ENCODE measurements at regions of chr2 and their contacts with region 1.

Region 1: GRCh38 chr2:235113854-235114253 is 162.0 kb downstream of the SH3BP4 start:
- DNase-seq: no peak
- H3K4me3 ChIP-seq: no peak overlapping the region
- H3K4me1 ChIP-seq: no peaks in the 10 kb centered on the region
- H3K27me3 ChIP-seq: no peaks in the 10 kb centered on the region

Region 2: GRCh38 chr2:234550511-234551107 is 563.2 kb before region 1 on chr2:
- in situ Hi-C with region 1: loop called (anchors 5 kb)
- DNase-seq: peak; percentile 74 to 77
- H3K4me3 ChIP-seq: no peak overlapping the region
- H3K4me1 ChIP-seq: 0 out of 2 replicates have a peak, but pooled peaks cover 6% of the 10 kb centered on the region
- H3K27me3 ChIP-seq: no peaks in the 10 kb centered on the region

Region 3: DNA sequence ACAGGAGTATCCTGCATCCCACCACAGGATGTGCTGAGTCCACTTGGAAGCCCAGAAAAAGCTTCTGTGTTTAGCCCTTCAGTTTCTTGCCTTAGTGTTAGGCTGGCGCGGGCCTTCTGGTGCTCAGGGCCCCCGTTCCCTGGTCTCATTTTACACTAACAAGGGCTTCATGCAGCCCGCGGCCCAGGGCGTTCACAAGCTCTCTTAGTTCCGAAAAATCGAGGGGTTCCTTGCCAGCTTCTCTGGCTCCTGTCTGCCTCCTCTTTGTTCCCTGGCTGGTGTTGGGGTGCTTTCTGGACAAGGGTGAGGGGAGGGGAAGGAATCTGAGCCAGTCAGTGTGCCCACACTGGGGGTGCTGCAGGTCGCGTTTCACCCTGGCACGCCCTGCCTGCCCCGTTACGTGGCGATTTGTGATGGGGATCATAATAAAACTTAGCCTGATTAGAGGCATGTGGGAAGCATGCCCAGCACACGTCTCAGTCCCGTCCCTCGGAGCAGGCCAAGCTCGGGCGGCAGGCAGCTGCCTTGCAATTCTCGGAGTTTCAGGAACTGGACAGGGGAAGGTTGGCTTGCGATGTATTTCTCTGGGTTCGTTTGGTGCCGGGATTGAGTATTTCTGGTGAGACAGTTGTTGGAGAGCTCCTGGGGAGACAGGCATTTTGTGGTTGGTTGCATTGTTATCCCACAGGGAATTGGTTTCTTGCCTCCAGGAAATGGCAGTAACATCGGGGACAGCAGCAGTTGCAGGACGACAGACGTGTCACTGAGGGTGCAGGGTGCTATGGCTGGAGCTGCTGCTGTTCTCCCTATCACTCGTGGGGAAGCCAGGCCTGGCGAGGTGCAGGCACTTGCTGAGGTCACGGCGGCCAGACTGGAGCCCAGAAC is 139.1 kb before region 1 on chr2:
- in situ Hi-C with region 1: no loop called
- DNase-seq: no peak
- H3K4me3 ChIP-seq: no peak overlapping the region
- H3K4me1 ChIP-seq: peaks cover 13% of the 10 kb centered on the region
- H3K27me3 ChIP-seq: no peaks in the 10 kb centered on the region

Measured in HAP-1 (cell line).